ENCODE measurements at regions of chr5 and their contacts with region 1.

Region 1: GRCh38 chr5:157142317-157143126 is at the start of gene MED7:
- DNase-seq: peak; percentile 96
- H3K4me3 Mint-ChIP-seq: peak within 1 kb of the TSS; percentile 90
- H3K27ac Mint-ChIP-seq: peak within 1 kb of the TSS; percentile 98
- H3K4me1 Mint-ChIP-seq: peaks cover 43% of the 10 kb centered on the region
- H3K27me3 Mint-ChIP-seq: no peaks in the 10 kb centered on the region
- total RNA-seq, gene MED7: 16.8 to 17.7 TPM

Region 2: DNA sequence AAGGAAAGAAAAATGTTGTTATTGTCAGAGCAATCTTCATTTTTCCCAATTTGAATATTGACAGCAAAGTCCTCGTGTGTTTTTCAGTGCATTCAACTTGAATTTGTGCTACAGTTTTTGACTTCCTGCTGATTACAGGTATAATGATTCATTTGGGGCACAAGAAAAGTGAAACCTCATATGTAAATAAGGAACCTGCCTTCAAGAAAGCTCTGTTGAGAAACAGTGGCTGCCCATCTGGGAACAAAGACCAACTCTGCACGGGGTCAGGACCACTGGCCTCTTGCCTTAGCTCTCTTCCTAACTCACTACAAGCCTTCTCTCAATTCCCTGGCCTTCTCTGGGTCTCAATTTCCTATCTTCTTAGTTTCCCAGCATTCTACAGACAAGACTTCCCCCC is 200.5 kb before region 1 on chr5:
- CTCF ChIA-PET with region 1: no interaction called
- POLR2A ChIA-PET with region 1: interaction called, 15 read pairs
- DNase-seq: peak; percentile 21
- H3K4me3 Mint-ChIP-seq: no peak overlapping the region
- H3K27ac Mint-ChIP-seq: peak overlapping the region; percentile 80
- H3K4me1 Mint-ChIP-seq: peaks cover 21% of the 10 kb centered on the region
- H3K27me3 Mint-ChIP-seq: peaks cover 7% of the 10 kb centered on the region

Region 3: GRCh38 chr5:156956321-156956720 is 186.2 kb before region 1 on chr5:
- CTCF ChIA-PET with region 1: no interaction called
- POLR2A ChIA-PET with region 1: no interaction called
- DNase-seq: no peak
- H3K4me3 Mint-ChIP-seq: no peak overlapping the region
- H3K27ac Mint-ChIP-seq: no peak overlapping the region
- H3K4me1 Mint-ChIP-seq: peaks cover 3% of the 10 kb centered on the region
- H3K27me3 Mint-ChIP-seq: peaks cover 2% of the 10 kb centered on the region

Region 4: DNA sequence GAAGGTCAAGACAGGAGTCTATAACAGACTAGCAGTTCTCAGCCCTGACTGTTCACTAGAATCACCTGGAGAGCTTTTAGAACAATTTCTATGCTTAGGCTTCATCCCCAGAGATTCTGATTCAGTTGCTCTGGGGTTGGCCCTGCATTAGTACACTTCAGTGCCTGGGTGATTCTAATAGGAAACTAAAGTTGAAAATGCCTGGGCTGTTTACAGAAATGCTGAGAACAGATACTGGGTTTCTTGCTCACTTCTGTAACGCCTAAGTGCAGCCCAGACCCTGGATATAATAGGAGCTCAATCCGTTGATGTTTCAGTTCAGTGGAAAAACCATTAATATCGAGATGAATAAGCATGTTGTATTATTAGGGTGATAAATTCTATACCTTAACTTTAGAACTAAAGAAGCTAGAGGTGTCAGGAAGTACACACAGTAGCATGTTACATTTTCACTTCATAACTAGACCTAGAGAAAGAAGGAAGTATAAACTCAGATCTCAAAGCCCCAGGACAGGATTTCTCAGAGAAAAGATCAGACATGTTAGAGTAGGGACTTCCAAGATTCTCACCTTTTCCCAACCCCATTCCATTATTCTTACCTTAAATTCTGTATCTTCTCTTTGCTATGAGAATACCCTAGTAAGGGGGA is 54.1 kb before region 1 on chr5:
- CTCF ChIA-PET with region 1: no interaction called
- POLR2A ChIA-PET with region 1: no interaction called
- DNase-seq: no peak
- H3K4me3 Mint-ChIP-seq: no peak overlapping the region
- H3K27ac Mint-ChIP-seq: no peak overlapping the region
- H3K4me1 Mint-ChIP-seq: no peaks in the 10 kb centered on the region
- H3K27me3 Mint-ChIP-seq: no peaks in the 10 kb centered on the region

Region 5: GRCh38 chr5:157116483-157116954 is 26.0 kb before region 1 on chr5:
- CTCF ChIA-PET with region 1: no interaction called
- POLR2A ChIA-PET with region 1: interaction called, 18 read pairs
- DNase-seq: no peak
- H3K4me3 Mint-ChIP-seq: no peak overlapping the region
- H3K27ac Mint-ChIP-seq: no peak overlapping the region
- H3K4me1 Mint-ChIP-seq: peaks cover 36% of the 10 kb centered on the region
- H3K27me3 Mint-ChIP-seq: no peaks in the 10 kb centered on the region

Region 6: GRCh38 chr5:157172403-157172802 is 29.9 kb after region 1 on chr5:
- CTCF ChIA-PET with region 1: interaction called, 4 read pairs
- POLR2A ChIA-PET with region 1: interaction called, 16 read pairs
- DNase-seq: peak; percentile 85
- H3K4me3 Mint-ChIP-seq: peak overlapping the region; percentile 46
- H3K27ac Mint-ChIP-seq: peak overlapping the region; percentile 85
- H3K4me1 Mint-ChIP-seq: peaks cover 76% of the 10 kb centered on the region
- H3K27me3 Mint-ChIP-seq: no peaks in the 10 kb centered on the region

Region 7: GRCh38 chr5:157204765-157205164 is 62.2 kb after region 1 on chr5:
- CTCF ChIA-PET with region 1: no interaction called
- POLR2A ChIA-PET with region 1: interaction called, 18 read pairs
- DNase-seq: no peak
- H3K4me3 Mint-ChIP-seq: no peak overlapping the region
- H3K27ac Mint-ChIP-seq: peak overlapping the region; percentile 68
- H3K4me1 Mint-ChIP-seq: peaks cover 87% of the 10 kb centered on the region
- H3K27me3 Mint-ChIP-seq: no peaks in the 10 kb centered on the region

Region 8: DNA sequence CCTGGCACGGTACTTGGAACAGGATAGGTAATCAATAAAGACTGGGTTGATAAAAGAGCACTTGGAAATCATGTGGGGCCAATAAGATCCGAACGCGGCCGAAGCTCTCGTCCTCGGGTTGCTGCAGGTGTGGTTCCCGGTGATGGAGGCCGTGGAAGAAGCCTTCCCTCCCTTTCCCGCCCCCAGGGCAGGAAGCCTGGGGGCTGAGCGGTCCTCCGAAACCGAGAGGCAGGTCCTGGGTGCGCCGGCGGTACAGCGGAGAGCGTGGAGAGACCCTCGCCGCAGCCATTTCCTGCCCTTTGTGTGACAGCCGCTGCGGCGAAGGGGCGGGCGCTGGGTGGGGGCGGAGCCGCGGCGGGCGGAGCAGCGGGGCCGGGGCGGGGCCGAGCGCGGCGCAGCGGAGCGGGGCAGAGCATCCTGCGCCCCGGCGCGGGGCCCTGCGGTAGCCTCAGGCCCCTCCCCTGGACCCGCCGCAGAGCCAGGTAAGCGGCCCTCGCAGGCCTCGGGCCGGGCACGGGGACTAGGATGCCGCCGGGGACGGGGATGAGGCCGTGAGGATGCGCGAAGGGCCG is 123.3 kb after region 1 on chr5 and contains the start of gene CYFIP2:
- CTCF ChIA-PET with region 1: no interaction called
- POLR2A ChIA-PET with region 1: interaction called, 25 read pairs
- DNase-seq: peak; percentile 91
- H3K4me3 Mint-ChIP-seq: peak within 1 kb of the TSS; percentile 98
- H3K27ac Mint-ChIP-seq: peak within 1 kb of the TSS; percentile 97
- H3K4me1 Mint-ChIP-seq: peaks cover 66% of the 10 kb centered on the region
- H3K27me3 Mint-ChIP-seq: no peaks in the 10 kb centered on the region
- total RNA-seq, gene CYFIP2: 337 to 354 TPM

Region 9: DNA sequence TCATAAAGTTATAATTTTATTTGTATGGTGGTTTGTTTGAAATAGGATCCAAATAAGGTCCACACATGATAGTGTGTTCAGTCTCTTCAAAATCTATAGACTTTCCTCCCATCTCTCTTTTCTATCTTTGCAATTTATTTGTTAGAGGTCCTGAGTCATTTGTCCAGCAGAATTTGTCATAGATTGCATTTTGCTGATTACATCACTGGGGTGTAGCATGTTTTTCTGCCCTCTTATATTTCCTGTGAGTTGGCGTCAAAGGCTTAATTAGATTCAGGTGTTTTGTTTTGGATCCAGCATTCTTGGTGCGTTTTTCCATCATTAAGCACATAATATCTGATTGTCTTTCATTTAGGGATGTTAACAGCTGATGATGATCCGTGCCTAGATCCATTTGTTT is 138.4 kb after region 1 on chr5:
- CTCF ChIA-PET with region 1: no interaction called
- POLR2A ChIA-PET with region 1: no interaction called
- DNase-seq: no peak
- H3K4me3 Mint-ChIP-seq: no peak overlapping the region
- H3K27ac Mint-ChIP-seq: peak overlapping the region; percentile 12
- H3K4me1 Mint-ChIP-seq: peaks cover 79% of the 10 kb centered on the region
- H3K27me3 Mint-ChIP-seq: no peaks in the 10 kb centered on the region

Measured in activated CD4-positive, alpha-beta memory T cell treated with anti-CD3 and anti-CD28 coated beads, Interleukin-2, amount 10 ng/mL, durations not matched to agents 7 days and 5 days (primary cell).